ENCODE measurements at regions of chr11 and their contacts with region 1.

Region 1: DNA sequence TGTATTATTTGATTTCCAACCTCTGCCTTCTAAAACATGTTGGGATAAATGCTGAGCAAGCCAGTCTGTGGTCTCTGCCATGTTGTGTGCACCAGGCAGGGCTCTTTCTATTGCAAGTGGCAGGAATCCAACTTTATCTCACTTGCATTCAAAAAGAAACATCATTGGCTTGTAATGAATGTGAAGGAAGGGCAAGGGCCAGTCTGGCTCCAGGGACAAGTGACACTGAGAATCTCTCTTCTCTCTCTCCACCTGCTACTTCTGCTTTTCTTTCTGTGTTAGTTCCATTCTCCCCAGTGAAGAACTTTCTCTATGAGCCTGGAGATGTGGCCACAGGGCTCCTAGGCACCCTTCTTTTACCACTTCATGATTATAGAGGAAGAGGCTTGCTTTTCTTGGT is 329.9 kb upstream of the NCAM1 start:
- DNase-seq: no peak
- H3K4me3 Mint-ChIP-seq: no peak overlapping the region
- H3K27ac Mint-ChIP-seq: no peak overlapping the region
- H3K4me1 Mint-ChIP-seq: peaks cover 5% of the 10 kb centered on the region
- H3K27me3 Mint-ChIP-seq: peaks cover 11% of the 10 kb centered on the region

Region 2: DNA sequence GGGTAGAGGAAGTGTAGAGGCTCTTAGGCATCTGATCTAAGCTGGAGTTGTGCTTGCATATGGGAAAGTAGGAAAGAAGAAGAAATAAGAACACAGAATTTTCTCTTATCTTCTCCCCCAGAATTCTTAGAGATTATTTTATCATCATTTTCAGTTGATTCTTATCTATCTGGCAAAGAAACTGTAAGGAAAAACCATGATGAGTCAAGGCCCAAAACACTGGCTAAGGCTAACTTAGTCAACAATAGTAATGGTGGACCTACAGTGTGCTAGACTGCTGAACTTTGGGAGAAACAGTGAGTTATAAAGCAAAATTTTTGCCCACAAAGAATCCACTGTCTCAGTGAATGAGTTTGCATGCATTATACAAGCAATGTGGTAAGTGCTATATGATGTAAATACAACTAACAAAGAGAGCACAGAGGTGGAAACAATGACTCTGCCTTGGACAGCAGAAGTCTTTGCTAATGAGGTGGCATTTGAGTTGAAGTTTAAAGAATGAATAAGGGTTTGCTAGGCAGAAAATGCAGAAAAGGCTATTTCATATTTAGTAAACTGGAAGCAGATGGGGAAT is 26.2 kb before region 1 on chr11:
- CTCF ChIA-PET with region 1: no interaction called
- intact Hi-C with region 1: loop called (anchors 1 kb)
- DNase-seq: no peak
- H3K4me3 Mint-ChIP-seq: no peak overlapping the region
- H3K27ac Mint-ChIP-seq: no peak overlapping the region
- H3K4me1 Mint-ChIP-seq: no peaks in the 10 kb centered on the region
- H3K27me3 Mint-ChIP-seq: peaks cover 6% of the 10 kb centered on the region

Region 3: GRCh38 chr11:112658431-112658878 is 27.1 kb after region 1 on chr11:
- CTCF ChIA-PET with region 1: no interaction called
- intact Hi-C with region 1: no loop called
- DNase-seq: no peak
- H3K4me3 Mint-ChIP-seq: no peak overlapping the region
- H3K27ac Mint-ChIP-seq: no peak overlapping the region
- H3K4me1 Mint-ChIP-seq: no peaks in the 10 kb centered on the region
- H3K27me3 Mint-ChIP-seq: peaks cover 3% of the 10 kb centered on the region

Measured in activated naive CD4-positive, alpha-beta T cell treated with anti-CD3 and anti-CD28 coated beads for 36 hours (primary cell).